ENCODE measurements at regions of chr20 and their contacts with region 1.

Region 1: DNA sequence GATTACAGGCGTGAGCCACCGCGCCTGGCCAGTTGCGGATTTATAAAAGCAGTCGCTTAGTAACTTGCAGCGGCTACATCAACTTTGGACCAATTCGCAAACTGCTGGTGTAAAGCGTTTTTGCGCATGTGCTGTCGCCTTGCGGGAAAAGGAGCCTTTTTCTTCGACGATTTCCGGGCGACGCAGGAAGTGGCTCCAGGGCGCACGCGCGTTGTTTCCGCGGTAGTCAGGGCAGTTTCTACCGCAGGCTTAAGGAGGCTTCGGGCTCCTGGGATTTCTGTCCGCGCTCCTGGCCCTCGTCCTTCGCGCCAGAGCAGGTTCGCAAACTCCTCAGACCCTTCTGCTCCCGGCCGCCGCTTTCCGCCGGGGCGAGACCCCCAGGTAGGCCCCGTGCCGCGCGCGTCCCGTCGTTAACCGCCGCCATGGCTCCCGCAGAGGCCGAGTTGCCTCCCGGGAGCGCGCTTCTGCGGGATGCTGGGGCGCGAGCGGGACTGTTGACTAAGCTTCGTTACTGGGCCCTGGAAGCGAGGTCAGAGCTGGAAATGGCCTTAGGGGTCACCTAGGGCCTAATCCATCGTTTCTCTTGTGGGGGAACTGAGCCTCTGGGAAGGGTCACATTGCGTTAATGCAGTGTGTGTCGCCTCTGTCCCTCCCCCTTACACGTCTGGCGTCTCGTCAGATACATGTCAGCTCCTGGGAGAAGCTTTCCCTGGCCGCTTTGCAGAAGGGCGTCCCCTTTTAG is at the start of gene RAE1:
- DNase-seq: peak; percentile 80 to 97 (median 92)
- ATAC-seq: peak; percentile 86
- H3K4me3 ChIP-seq: peak within 1 kb of the TSS; percentile 78 to 97
- H3K4me3 Mint-ChIP-seq: peak within 1 kb of the TSS; percentile 90
- H3K27ac ChIP-seq: peak within 1 kb of the TSS; percentile 78 to 84
- H3K27ac Mint-ChIP-seq: peak within 1 kb of the TSS; percentile 92
- H3K4me1 ChIP-seq: peaks cover 23% of the 10 kb centered on the region
- H3K4me1 Mint-ChIP-seq: peaks cover 27% of the 10 kb centered on the region
- H3K27me3 ChIP-seq: no peaks in the 10 kb centered on the region
- H3K27me3 Mint-ChIP-seq: no peaks in the 10 kb centered on the region
- CTCF ChIP-seq: no peak
- total RNA-seq, gene RAE1: 58.9 to 59.4 TPM

Region 2: DNA sequence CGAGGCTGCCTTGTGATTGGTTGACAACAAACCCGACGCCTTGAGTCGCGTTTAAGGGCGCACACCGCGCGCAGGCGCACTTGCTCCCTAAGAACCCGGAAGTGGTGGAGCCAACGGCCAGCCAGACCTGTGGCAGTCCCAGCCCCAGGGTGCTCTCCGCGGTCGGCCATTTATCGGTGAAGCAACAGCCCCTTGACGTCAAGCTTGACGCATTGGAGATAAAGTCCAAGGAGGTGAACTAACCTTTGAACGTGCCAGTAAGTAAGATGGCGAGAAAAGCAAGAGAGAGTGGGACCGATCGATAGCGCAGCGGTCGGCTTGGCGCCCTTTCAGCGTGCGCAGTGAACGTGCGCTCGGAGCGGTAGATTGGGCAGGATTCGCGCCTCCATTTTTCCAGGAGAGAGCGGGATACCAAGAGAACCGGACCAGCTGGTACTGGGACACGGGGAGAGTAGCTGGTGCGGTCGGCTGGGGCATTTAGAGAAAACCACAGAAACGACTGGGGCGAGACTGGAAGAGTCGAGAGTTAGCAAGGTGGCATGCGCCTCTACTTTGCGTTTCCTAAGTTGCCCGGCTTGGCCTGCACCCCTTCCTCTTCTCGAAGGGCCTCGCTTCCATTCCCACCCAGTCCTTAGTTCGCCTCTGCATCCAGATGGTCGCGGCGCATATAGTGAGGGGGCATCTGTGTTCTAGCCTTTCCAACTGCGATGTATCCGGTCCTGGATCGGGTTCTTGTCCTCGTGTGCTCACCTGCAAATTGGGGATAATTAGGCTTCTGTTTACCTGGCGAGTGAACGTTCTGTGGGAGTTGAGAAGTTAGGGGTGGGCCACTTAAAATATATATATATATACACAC is 958.7 kb before region 1 on chr20 and contains the start of gene CSTF1:
- CTCF ChIA-PET with region 1: no interaction called
- POLR2A ChIA-PET with region 1: no interaction called
- intact Hi-C with region 1: loop called in 1 of 2 experiments (anchors 10 kb)
- DNase-seq: peak; percentile 98 to 99 (median 99)
- ATAC-seq: peak; percentile 84
- H3K4me3 ChIP-seq: peak within 1 kb of the TSS; percentile 91
- H3K4me3 Mint-ChIP-seq: no peak within 1 kb of the TSS
- H3K27ac ChIP-seq: peak within 1 kb of the TSS; percentile 95 to 97
- H3K27ac Mint-ChIP-seq: no peak within 1 kb of the TSS
- H3K4me1 ChIP-seq: peaks cover 17% of the 10 kb centered on the region
- H3K4me1 Mint-ChIP-seq: peaks cover 27% of the 10 kb centered on the region
- H3K27me3 ChIP-seq: no peaks in the 10 kb centered on the region
- H3K27me3 Mint-ChIP-seq: no peaks in the 10 kb centered on the region
- CTCF ChIP-seq: no peak
- total RNA-seq, gene CSTF1: 20.7 to 26.0 TPM

Region 3: GRCh38 chr20:56554869-56555268 is 796.3 kb before region 1 on chr20:
- CTCF ChIA-PET with region 1: interaction called, 11 read pairs
- POLR2A ChIA-PET with region 1: no interaction called
- intact Hi-C with region 1: loop called in 1 of 2 experiments (anchors 1 kb)
- DNase-seq: peak in 1 of 9 experiments; percentile 3
- ATAC-seq: no peak
- H3K4me3 ChIP-seq: no peak overlapping the region
- H3K4me3 Mint-ChIP-seq: no peak overlapping the region
- H3K27ac ChIP-seq: no peak overlapping the region
- H3K27ac Mint-ChIP-seq: no peak overlapping the region
- H3K4me1 ChIP-seq: no peaks in the 10 kb centered on the region
- H3K4me1 Mint-ChIP-seq: no peaks in the 10 kb centered on the region
- H3K27me3 ChIP-seq: no peaks in the 10 kb centered on the region
- H3K27me3 Mint-ChIP-seq: peaks cover 2% of the 10 kb centered on the region
- CTCF ChIP-seq: no peak

Region 4: DNA sequence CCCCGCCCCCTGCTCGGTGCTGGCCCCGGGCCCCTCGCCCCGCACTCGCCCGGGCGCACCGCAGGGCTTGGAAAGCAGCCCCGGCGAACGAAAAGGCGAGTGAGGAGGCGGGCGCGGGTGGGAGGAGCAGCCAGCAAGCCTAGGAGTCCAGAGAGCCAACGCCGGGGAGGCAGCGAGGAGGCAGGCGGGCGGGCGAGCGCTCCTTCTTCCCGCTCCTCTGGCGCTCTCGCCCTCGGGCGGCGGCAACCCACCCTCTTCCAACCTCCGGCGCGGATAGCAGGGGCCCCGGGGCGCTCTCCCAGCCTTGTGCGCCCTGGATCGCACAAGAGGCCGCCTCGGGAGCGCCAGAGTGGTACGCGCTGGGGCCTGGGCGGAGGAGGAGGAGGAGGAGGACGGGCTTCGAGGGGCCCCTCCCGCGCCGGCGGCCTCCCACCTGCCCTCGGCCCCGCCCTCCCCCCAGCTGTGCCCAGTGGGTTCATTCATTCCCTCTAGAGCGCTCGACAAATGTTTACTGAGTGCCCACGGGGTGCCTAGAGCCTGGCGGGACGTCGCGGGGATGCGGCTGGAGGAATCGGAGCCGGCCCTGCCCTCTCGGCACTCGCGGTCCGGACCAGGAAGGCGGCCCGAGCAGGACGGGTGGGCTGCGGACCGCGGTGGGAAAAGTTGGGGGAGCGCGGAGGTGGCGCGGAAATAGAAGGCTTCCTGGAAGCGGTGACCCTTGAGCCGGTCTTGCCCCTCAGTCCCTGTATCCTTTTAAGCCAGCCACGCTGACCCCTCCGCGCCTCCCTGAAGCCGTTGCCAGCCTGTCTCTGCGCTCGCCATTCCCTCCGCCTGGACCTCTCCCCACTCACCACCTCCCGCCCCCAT is 84.7 kb before region 1 on chr20 and contains the start of gene BMP7:
- CTCF ChIA-PET with region 1: no interaction called
- POLR2A ChIA-PET with region 1: no interaction called
- intact Hi-C with region 1: no loop called
- DNase-seq: no peak
- ATAC-seq: no peak
- H3K4me3 ChIP-seq: no peak within 1 kb of the TSS
- H3K4me3 Mint-ChIP-seq: no peak within 1 kb of the TSS
- H3K27ac ChIP-seq: no peak within 1 kb of the TSS
- H3K27ac Mint-ChIP-seq: no peak within 1 kb of the TSS
- H3K4me1 ChIP-seq: no peaks in the 10 kb centered on the region
- H3K4me1 Mint-ChIP-seq: peaks cover 6% of the 10 kb centered on the region
- H3K27me3 ChIP-seq: peaks cover 0 to 8% of the 10 kb centered on the region in 2 experiments
- H3K27me3 Mint-ChIP-seq: peaks cover 48% of the 10 kb centered on the region
- CTCF ChIP-seq: no peak
- total RNA-seq, gene BMP7: not detected

Region 5: GRCh38 chr20:57398231-57398821 is 47.1 kb after region 1 on chr20:
- CTCF ChIA-PET with region 1: interaction called, 4 read pairs
- POLR2A ChIA-PET with region 1: no interaction called
- intact Hi-C with region 1: loop called in 1 of 2 experiments (anchors 1 kb)
- DNase-seq: peak; percentile 88 to 98 (median 96)
- ATAC-seq: peak; percentile 69
- H3K4me3 ChIP-seq: peak overlapping the region; percentile 40 to 63
- H3K4me3 Mint-ChIP-seq: peak overlapping the region; percentile 76
- H3K27ac ChIP-seq: peak overlapping the region; percentile 78 to 90
- H3K27ac Mint-ChIP-seq: peak overlapping the region; percentile 97
- H3K4me1 ChIP-seq: peaks cover 96% of the 10 kb centered on the region
- H3K4me1 Mint-ChIP-seq: peaks cover 93% of the 10 kb centered on the region
- H3K27me3 ChIP-seq: no peaks in the 10 kb centered on the region
- H3K27me3 Mint-ChIP-seq: no peaks in the 10 kb centered on the region
- CTCF ChIP-seq: no peak

Region 6: GRCh38 chr20:57464715-57465211 is 113.5 kb after region 1 on chr20:
- CTCF ChIA-PET with region 1: no interaction called
- POLR2A ChIA-PET with region 1: no interaction called
- intact Hi-C with region 1: no loop called
- DNase-seq: peak in 1 of 9 experiments; percentile 13
- ATAC-seq: no peak
- H3K4me3 ChIP-seq: no peak overlapping the region
- H3K4me3 Mint-ChIP-seq: no peak overlapping the region
- H3K27ac ChIP-seq: no peak overlapping the region
- H3K27ac Mint-ChIP-seq: no peak overlapping the region
- H3K4me1 ChIP-seq: no peaks in the 10 kb centered on the region
- H3K4me1 Mint-ChIP-seq: no peaks in the 10 kb centered on the region
- H3K27me3 ChIP-seq: no peaks in the 10 kb centered on the region
- H3K27me3 Mint-ChIP-seq: no peaks in the 10 kb centered on the region
- CTCF ChIP-seq: no peak

Region 7: GRCh38 chr20:57526087-57526884 is 175.1 kb after region 1 on chr20:
- CTCF ChIA-PET with region 1: no interaction called
- POLR2A ChIA-PET with region 1: no interaction called
- intact Hi-C with region 1: no loop called
- DNase-seq: peak in 3 of 9 experiments; percentile 20 to 26 (median 22)
- ATAC-seq: no peak
- H3K4me3 ChIP-seq: no peak overlapping the region
- H3K4me3 Mint-ChIP-seq: no peak overlapping the region
- H3K27ac ChIP-seq: no peak overlapping the region
- H3K27ac Mint-ChIP-seq: no peak overlapping the region
- H3K4me1 ChIP-seq: no peaks in the 10 kb centered on the region
- H3K4me1 Mint-ChIP-seq: peaks cover 3% of the 10 kb centered on the region
- H3K27me3 ChIP-seq: no peaks in the 10 kb centered on the region
- H3K27me3 Mint-ChIP-seq: no peaks in the 10 kb centered on the region
- CTCF ChIP-seq: no peak

Region 8: GRCh38 chr20:57628047-57628961 is 277.1 kb after region 1 on chr20:
- CTCF ChIA-PET with region 1: no interaction called
- POLR2A ChIA-PET with region 1: no interaction called
- intact Hi-C with region 1: loop called in 1 of 2 experiments (anchors 1 kb)
- DNase-seq: peak; percentile 40 to 92 (median 67)
- ATAC-seq: peak; percentile 80
- H3K4me3 ChIP-seq: peak overlapping the region; percentile 31 to 44
- H3K4me3 Mint-ChIP-seq: peak overlapping the region; percentile 94
- H3K27ac ChIP-seq: peak overlapping the region; percentile 71 to 91
- H3K27ac Mint-ChIP-seq: peak overlapping the region; percentile 99
- H3K4me1 ChIP-seq: peaks cover 61% of the 10 kb centered on the region
- H3K4me1 Mint-ChIP-seq: peaks cover 74% of the 10 kb centered on the region
- H3K27me3 ChIP-seq: no peaks in the 10 kb centered on the region
- H3K27me3 Mint-ChIP-seq: no peaks in the 10 kb centered on the region
- CTCF ChIP-seq: no peak

Region 9: DNA sequence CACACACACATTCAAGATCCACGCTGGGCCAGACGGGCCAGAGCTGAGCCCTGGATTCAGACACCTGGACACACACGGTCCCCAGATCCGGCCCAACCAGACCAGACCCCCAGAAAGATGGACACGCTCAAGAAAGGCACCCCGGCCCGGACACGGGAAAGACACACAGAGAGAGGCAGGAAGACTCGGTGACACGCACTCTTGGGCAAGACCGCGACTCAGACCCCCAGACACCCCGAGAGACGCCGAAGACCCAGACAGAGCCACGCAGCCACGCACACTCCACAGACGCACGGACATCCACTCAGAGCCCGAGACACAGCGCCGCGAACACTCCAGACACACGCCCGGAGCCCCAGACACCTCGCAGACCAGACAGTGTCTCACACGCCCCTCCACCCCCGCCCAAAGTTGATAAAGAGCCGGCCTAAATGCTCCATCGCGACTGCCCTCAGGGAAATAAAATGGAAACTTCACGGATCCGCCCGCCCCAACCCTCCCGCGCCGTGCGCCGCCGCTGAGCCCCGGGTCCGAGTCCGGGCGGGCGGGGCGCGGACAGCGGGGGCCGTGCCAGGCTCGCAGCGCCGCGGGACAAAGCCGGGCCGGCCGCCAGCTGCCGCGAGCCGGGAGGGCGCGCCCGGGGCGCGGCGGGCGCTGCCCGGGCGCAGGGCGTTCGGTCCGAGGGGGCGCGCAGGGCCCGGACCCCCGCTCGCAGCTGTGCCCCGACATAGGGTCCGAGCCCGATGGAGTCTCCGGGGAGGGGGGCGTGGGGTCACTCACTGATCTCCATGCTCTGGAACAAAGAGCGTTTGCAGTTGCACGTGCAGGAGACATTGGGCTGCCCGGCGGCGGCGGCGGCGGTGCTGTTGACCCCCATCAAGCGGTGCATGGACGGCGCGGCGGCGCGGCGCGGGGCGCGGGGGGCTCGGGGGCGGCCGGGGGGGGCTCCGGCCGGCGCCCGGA is 357.8 kb after region 1 on chr20:
- CTCF ChIA-PET with region 1: no interaction called
- POLR2A ChIA-PET with region 1: no interaction called
- intact Hi-C with region 1: no loop called
- DNase-seq: peak in 5 of 9 experiments; percentile 32 to 72 (median 63)
- ATAC-seq: no peak
- H3K4me3 ChIP-seq: peak overlapping the region; percentile 8 to 31
- H3K4me3 Mint-ChIP-seq: peak overlapping the region; percentile 92
- H3K27ac ChIP-seq: no peak overlapping the region
- H3K27ac Mint-ChIP-seq: peak overlapping the region; percentile 92
- H3K4me1 ChIP-seq: peaks cover 32% of the 10 kb centered on the region
- H3K4me1 Mint-ChIP-seq: peaks cover 35% of the 10 kb centered on the region
- H3K27me3 ChIP-seq: peaks cover 0 to 10% of the 10 kb centered on the region in 2 experiments
- H3K27me3 Mint-ChIP-seq: no peaks in the 10 kb centered on the region
- CTCF ChIP-seq: no peak

Region 10: DNA sequence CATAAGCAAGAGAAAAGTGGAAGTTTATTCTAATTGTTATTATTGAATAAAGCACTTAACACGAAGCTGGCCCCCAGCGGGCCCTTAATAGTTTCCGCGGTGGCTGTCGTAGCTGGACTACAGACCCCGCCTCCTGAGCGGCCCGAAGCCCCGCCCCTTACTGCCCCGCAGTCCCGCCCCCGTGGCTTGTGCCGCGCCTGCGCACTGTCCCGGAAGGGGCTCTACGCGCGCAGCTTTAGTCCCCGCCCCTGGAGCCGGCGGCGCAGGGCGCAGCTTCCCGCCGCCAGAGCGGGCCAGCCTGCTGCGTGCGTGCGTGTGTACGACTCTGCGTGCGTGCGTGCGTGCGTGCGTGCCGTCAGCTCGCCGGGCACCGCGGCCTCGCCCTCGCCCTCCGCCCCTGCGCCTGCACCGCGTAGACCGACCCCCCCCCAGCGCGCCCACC is 1037.7 kb after region 1 on chr20 and contains the start of gene VAPB:
- CTCF ChIA-PET with region 1: no interaction called
- POLR2A ChIA-PET with region 1: no interaction called
- intact Hi-C with region 1: loop called in 1 of 2 experiments (anchors 2 kb)
- DNase-seq: peak; percentile 94 to 99 (median 97)
- ATAC-seq: peak; percentile 95
- H3K4me3 ChIP-seq: peak within 1 kb of the TSS; percentile 87 to 90
- H3K4me3 Mint-ChIP-seq: peak within 1 kb of the TSS; percentile 88
- H3K27ac ChIP-seq: peak within 1 kb of the TSS; percentile 98 to 99
- H3K27ac Mint-ChIP-seq: peak within 1 kb of the TSS; percentile 96
- H3K4me1 ChIP-seq: peaks cover 43% of the 10 kb centered on the region
- H3K4me1 Mint-ChIP-seq: peaks cover 40% of the 10 kb centered on the region
- H3K27me3 ChIP-seq: peaks cover 0 to 2% of the 10 kb centered on the region in 2 experiments
- H3K27me3 Mint-ChIP-seq: peaks cover 4% of the 10 kb centered on the region
- CTCF ChIP-seq: no peak
- total RNA-seq, gene VAPB: 29.3 to 32.3 TPM

Measured in CD8-positive, alpha-beta T cell (primary cell).